ENCODE measurements at regions of chr17 and their contacts with region 1.

Region 1: GRCh38 chr17:8954339-8954738 is 11.2 kb downstream of the PIK3R5 start:
- DNase-seq: peak; percentile 92
- H3K4me3 Mint-ChIP-seq: peak overlapping the region; percentile 25
- H3K27ac Mint-ChIP-seq: peak overlapping the region; percentile 83
- H3K4me1 Mint-ChIP-seq: peaks cover 95% of the 10 kb centered on the region
- H3K27me3 Mint-ChIP-seq: no peaks in the 10 kb centered on the region

Region 2: GRCh38 chr17:8900626-8901585 is 53.4 kb before region 1 on chr17:
- CTCF ChIA-PET with region 1: interaction called, 6 read pairs
- intact Hi-C with region 1: loop called (anchors 1 kb)
- DNase-seq: peak; percentile 58
- H3K4me3 Mint-ChIP-seq: no peak overlapping the region
- H3K27ac Mint-ChIP-seq: no peak overlapping the region
- H3K4me1 Mint-ChIP-seq: peaks cover 60% of the 10 kb centered on the region
- H3K27me3 Mint-ChIP-seq: no peaks in the 10 kb centered on the region

Region 3: GRCh38 chr17:8965394-8966168 is 11.2 kb after region 1 on chr17 and contains the start of gene PIK3R5:
- CTCF ChIA-PET with region 1: interaction called, 5 read pairs
- intact Hi-C with region 1: loop called (anchors 1 kb)
- DNase-seq: peak; percentile 82
- H3K4me3 Mint-ChIP-seq: peak within 1 kb of the TSS; percentile 95
- H3K27ac Mint-ChIP-seq: peak within 1 kb of the TSS; percentile 80
- H3K4me1 Mint-ChIP-seq: peaks cover 46% of the 10 kb centered on the region
- H3K27me3 Mint-ChIP-seq: no peaks in the 10 kb centered on the region
- total RNA-seq, gene PIK3R5: 15.9 to 18.1 TPM

Measured in activated naive CD4-positive, alpha-beta T cell treated with anti-CD3 and anti-CD28 coated beads for 36 hours (primary cell).